ENCODE measurements at regions of chr3 and their contacts with region 1.

Region 1: DNA sequence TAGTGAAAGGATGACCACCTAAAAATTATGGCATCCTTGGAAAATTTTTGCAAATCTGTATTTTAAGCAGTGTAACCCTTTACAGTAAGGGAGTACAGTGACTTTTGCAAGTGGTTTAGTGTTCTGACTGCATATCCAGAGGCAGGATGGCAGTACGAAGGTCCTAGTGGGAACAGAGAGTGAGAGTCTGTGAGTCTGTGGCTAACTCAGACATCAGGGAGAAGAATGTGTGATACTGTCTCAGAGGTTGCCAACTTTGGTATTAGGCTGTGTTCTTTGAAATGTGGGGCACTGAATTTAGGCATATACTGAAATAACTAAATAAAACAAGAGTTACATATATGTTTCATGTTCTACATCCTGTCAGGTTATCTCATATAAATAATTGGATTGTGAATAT is 25.7 kb downstream of the PRKCI start:
- DNase-seq: no peak
- ATAC-seq: no peak
- H3K4me3 Mint-ChIP-seq: no peak overlapping the region
- H3K27ac Mint-ChIP-seq: no peak overlapping the region
- H3K4me1 Mint-ChIP-seq: peaks cover 6% of the 10 kb centered on the region
- H3K27me3 Mint-ChIP-seq: no peaks in the 10 kb centered on the region
- CTCF ChIP-seq: no peak

Region 2: GRCh38 chr3:170205302-170205701 is 42.6 kb before region 1 on chr3:
- CTCF ChIA-PET with region 1: no interaction called
- POLR2A ChIA-PET with region 1: interaction called, 12 read pairs
- intact Hi-C with region 1: no loop called
- DNase-seq: no peak
- ATAC-seq: no peak
- H3K4me3 Mint-ChIP-seq: no peak overlapping the region
- H3K27ac Mint-ChIP-seq: no peak overlapping the region
- H3K4me1 Mint-ChIP-seq: no peaks in the 10 kb centered on the region
- H3K27me3 Mint-ChIP-seq: peaks cover 24% of the 10 kb centered on the region
- CTCF ChIP-seq: no peak

Region 3: DNA sequence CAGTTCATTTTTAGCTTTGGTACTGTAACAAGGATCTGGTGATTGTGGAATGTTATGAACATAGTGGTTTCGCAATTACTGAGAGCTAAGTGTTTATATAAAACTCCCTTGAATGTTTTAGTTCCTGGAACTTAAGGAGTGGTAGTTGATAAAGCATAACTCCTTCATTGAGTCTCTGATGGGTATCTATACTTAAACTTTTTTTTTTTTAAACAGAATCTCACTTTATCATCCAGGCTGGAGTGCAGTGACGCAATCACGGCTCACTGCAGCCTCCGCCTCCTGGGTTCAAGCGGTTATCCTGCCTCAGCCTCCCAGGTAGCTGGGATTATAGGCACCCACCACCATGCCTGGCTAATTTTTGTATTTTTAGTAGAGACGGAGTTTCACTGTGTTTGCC is 14.3 kb before region 1 on chr3:
- CTCF ChIA-PET with region 1: no interaction called
- POLR2A ChIA-PET with region 1: interaction called, 10 read pairs
- intact Hi-C with region 1: no loop called
- DNase-seq: no peak
- ATAC-seq: no peak
- H3K4me3 Mint-ChIP-seq: no peak overlapping the region
- H3K27ac Mint-ChIP-seq: no peak overlapping the region
- H3K4me1 Mint-ChIP-seq: peaks cover 7% of the 10 kb centered on the region
- H3K27me3 Mint-ChIP-seq: no peaks in the 10 kb centered on the region
- CTCF ChIP-seq: no peak

Measured in activated B cell treated with CpG ODN at 0.5 μM for 24 hours (primary cell).